GM12878 (cell line): ENCODE measurements at regions of chr19 and their contacts with region 1.

Region 1: DNA sequence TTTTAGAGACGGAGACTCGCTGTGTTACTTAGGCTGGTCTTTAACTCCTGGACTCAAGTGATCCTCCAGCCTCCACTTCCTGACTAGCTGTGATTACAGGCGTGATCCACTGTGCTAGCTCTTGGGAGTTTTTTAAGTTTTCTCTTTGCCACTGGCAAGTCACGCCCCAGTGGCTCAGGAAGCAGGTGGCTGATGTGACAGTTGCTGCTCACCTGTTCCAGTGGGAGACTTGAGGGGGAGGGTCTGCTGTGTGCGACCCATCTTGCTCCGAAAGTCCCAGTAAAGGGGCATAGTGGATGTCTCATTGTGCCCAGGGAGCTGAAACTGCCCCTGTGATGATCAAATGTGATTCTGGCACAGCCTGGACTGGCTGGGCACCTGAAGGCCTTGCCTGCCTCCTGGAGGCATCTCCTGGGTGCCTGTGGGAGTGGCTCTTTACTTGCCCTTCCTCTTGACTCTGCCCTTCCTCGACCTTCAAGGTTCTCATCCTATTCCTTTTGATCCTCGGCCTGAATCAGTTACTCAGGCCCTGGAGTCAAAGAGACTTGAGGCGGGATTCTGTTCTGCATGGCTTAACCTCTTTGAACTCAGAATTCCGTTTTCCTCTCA is 7.8 kb downstream of the SMARCA4 start:
- DNase-seq: peak; percentile 41
- ATAC-seq: peak; percentile 74
- H3K4me3 ChIP-seq: peak overlapping the region; percentile 50
- H3K27ac ChIP-seq: peak overlapping the region; percentile 50
- H3K4me1 ChIP-seq: peaks cover 41% of the 10 kb centered on the region
- H3K27me3 ChIP-seq: no peaks in the 10 kb centered on the region
- CTCF ChIP-seq: peak in 1 of 3 experiments; percentile 11; a peak in 1 of 6 replicates
- EP300 ChIP-seq: no peak
- POLR2A ChIP-seq: peak; percentile 29; the same call in 1 of the 2 replicates
- RAD21 ChIP-seq: 0 out of 2 replicates have a peak, but pooled peaks have one; percentile 3

Region 2: DNA sequence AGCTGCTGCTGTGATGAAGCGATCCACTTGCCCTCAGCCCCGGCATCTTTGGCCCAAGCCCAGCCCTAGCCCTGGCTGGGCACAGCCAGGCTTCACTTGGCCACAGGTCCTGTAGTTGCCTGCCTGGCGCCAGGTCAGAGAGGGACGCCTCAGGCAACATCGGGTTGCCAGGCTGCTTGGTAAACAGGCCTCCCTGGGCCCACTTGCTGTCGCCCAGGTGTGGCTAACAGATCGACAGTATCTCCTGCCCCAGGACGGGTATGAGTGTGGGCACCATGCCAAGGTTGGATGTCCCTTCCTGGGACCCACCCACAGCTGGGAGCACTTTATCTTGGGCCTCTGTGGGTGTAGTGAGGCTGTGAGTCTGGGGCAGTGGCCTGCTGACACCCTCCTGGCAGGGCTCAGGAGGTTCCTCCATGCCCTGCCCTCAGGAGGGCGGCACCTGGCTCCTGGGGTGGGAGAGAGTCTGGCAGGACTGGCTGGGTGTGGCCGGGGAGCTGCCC is 69.4 kb before region 1 on chr19:
- CTCF ChIA-PET with region 1: no interaction called
- POLR2A ChIA-PET with region 1: no interaction called
- RAD21 ChIA-PET with region 1: no interaction called
- SMC1A ChIA-PET with region 1: no interaction called
- in situ Hi-C with region 1: no loop called
- intact Hi-C with region 1: no loop called
- DNase-seq: no peak
- ATAC-seq: no peak
- H3K4me3 ChIP-seq: no peak overlapping the region
- H3K27ac ChIP-seq: no peak overlapping the region
- H3K4me1 ChIP-seq: peaks cover 4% of the 10 kb centered on the region; the same call in 1 of the 2 replicates
- H3K27me3 ChIP-seq: no peaks in the 10 kb centered on the region
- CTCF ChIP-seq: no peak
- EP300 ChIP-seq: no peak
- POLR2A ChIP-seq: no peak
- RAD21 ChIP-seq: no peak

Region 3: DNA sequence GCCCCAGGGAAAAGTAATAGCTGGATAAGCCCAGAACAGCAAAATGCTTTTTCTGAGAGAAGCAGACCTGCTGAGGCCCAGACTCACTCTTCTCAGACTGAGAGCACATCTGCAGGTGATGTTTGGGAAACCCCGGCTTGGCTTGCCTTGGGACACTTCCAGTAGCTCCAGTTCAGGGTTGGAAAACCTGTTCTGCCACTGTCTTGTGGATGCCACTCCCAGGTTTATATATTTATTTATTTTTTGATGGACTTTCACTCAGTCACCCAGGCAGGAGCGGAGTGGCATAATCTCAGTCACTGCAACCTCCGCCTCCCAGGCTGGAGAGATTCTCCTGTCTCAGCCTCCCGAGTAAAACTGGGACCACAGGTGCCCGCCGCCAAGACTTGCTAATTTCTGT is 15.8 kb before region 1 on chr19:
- CTCF ChIA-PET with region 1: interaction called, 8 read pairs
- POLR2A ChIA-PET with region 1: interaction called, 15 read pairs
- RAD21 ChIA-PET with region 1: interaction called, 11 read pairs
- SMC1A ChIA-PET with region 1: interaction called, 12 read pairs
- in situ Hi-C with region 1: no loop called
- intact Hi-C with region 1: no loop called
- DNase-seq: no peak
- ATAC-seq: no peak
- H3K4me3 ChIP-seq: no peak overlapping the region
- H3K27ac ChIP-seq: no peak overlapping the region
- H3K4me1 ChIP-seq: peaks cover 10% of the 10 kb centered on the region
- H3K27me3 ChIP-seq: no peaks in the 10 kb centered on the region
- CTCF ChIP-seq: no peak
- EP300 ChIP-seq: no peak
- POLR2A ChIP-seq: no peak
- RAD21 ChIP-seq: no peak

Region 4: GRCh38 chr19:10979951-10980381 is 11.3 kb after region 1 on chr19:
- CTCF ChIA-PET with region 1: interaction called, 6 read pairs
- POLR2A ChIA-PET with region 1: interaction called, 5 read pairs
- RAD21 ChIA-PET with region 1: interaction called, 10 read pairs
- SMC1A ChIA-PET with region 1: interaction called, 5 read pairs
- in situ Hi-C with region 1: no loop called
- intact Hi-C with region 1: no loop called
- DNase-seq: peak; percentile 33
- ATAC-seq: peak; percentile 95
- H3K4me3 ChIP-seq: 0 out of 2 replicates have a peak overlapping the region, but pooled peaks have one; percentile 15
- H3K27ac ChIP-seq: 0 out of 2 replicates have a peak overlapping the region, but pooled peaks have one; percentile 20
- H3K4me1 ChIP-seq: peaks cover 26% of the 10 kb centered on the region
- H3K27me3 ChIP-seq: no peaks in the 10 kb centered on the region
- CTCF ChIP-seq: peak; percentile 24 to 32 (median 31); a peak in 2 of 6 replicates
- EP300 ChIP-seq: no peak
- POLR2A ChIP-seq: no peak
- RAD21 ChIP-seq: peak; percentile 32; the same call in 1 of the 2 replicates

Region 5: DNA sequence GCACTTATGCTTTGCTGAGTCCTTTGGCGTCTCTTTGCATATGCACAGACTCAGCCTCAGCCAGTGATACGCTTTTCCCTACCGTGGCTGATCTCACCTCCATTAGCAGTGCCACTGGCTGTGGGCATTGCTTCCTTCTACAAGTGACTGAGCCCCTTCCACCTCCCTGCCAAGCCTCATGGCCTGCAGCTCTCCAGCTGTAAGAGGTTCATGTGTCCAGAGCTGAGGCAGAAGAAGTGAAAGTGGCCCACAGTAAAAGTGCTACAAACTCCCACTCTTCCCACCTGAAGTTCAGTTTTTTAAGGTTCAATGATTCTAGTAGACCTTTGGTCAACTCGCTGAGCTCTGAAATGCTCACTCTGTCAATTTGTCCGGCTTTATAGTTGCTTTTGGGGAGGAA is 36.9 kb after region 1 on chr19:
- CTCF ChIA-PET with region 1: no interaction called
- POLR2A ChIA-PET with region 1: interaction called, 11 read pairs
- RAD21 ChIA-PET with region 1: interaction called, 4 read pairs
- SMC1A ChIA-PET with region 1: no interaction called
- in situ Hi-C with region 1: no loop called
- intact Hi-C with region 1: no loop called
- DNase-seq: no peak
- ATAC-seq: no peak
- H3K4me3 ChIP-seq: no peak overlapping the region
- H3K27ac ChIP-seq: no peak overlapping the region
- H3K4me1 ChIP-seq: no peaks in the 10 kb centered on the region
- H3K27me3 ChIP-seq: no peaks in the 10 kb centered on the region
- CTCF ChIP-seq: no peak
- EP300 ChIP-seq: no peak
- POLR2A ChIP-seq: no peak
- RAD21 ChIP-seq: no peak

Region 6: GRCh38 chr19:11422163-11423021 is 453.8 kb after region 1 on chr19:
- CTCF ChIA-PET with region 1: no interaction called
- POLR2A ChIA-PET with region 1: no interaction called
- RAD21 ChIA-PET with region 1: no interaction called
- SMC1A ChIA-PET with region 1: no interaction called
- in situ Hi-C with region 1: no loop called
- intact Hi-C with region 1: no loop called
- DNase-seq: peak; percentile 64
- ATAC-seq: peak; percentile 95
- H3K4me3 ChIP-seq: peak overlapping the region; percentile 39; the same call in 1 of the 2 replicates
- H3K27ac ChIP-seq: no peak overlapping the region
- H3K4me1 ChIP-seq: peaks cover 22% of the 10 kb centered on the region
- H3K27me3 ChIP-seq: peaks cover 7 to 16% of the 10 kb centered on the region in 2 experiments
- CTCF ChIP-seq: no peak
- EP300 ChIP-seq: 0 out of 4 replicates have a peak, but pooled peaks of 1 of the 2 experiments have one; percentile 7
- POLR2A ChIP-seq: peak; percentile 33; the same call in 1 of the 2 replicates
- RAD21 ChIP-seq: no peak